H1 (cell line): ENCODE measurements at regions of chr3 and their contacts with region 1.

Region 1: DNA sequence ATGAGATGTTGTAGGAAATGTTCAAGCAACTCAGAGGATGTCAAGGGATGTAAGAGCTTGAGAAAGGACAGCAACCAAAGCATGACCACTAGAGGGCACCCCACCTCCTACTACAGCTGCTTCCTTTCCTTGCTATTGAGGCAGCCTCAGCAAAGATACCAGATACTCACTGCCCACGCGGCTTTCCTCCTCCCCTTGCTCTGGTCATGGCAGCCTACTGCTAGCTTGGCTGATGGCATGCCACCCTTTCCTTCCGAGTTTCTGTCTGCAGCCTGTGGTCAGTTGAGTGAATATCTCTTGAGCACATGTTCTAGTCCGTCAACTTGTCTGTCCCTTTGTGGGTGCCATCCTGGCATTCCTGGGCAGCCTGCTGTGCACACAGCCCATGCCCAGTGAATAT is 4.4 kb upstream of the CXCR6 start:
- DNase-seq: peak; percentile 56 to 86
- H3K4me3 ChIP-seq: no peak overlapping the region
- H3K27ac ChIP-seq: no peak overlapping the region
- H3K4me1 ChIP-seq: peaks cover 0 to 2% (median under 1%) of the 10 kb centered on the region in 4 experiments; a peak in 2 of 7 replicates
- H3K27me3 ChIP-seq: no peaks in the 10 kb centered on the region
- CTCF ChIP-seq: peak; percentile 42 to 98 (median 81)
- EP300 ChIP-seq: no peak
- POLR2A ChIP-seq: no peak
- RAD21 ChIP-seq: peak; percentile 72 to 76

Region 2: DNA sequence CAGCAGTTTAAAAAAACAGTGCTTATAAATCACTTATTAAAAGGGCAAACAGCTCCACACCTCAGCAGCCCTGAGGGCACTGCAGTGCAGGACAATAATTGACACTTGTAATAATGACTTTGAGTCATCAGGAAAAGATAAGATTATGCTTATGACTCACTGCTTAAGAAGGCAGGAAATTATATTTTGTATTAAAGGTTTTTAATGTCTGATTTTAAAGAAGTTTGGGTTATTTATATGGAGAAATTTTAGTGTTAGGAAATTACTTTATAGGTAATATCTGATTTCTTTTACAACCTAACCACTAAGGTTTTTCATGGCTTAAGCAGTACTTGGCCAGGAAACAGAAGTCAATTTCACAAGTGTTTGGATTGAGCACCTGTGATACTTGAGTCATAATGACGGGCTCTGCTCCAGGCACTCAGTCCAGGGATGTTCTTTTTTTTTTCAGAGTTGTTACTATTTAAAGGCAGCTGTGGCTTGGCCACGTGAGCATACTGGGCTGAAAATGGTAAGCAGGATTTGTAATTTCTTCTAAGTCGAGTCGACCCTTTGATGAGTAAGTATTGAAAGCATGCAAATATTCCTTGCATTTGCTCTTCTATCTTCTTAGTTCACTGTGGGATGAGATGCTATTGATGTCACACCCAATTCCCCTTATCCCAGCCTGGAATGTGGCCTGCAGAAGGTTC is 120.9 kb before region 1 on chr3:
- CTCF ChIA-PET with region 1: no interaction called
- POLR2A ChIA-PET with region 1: no interaction called
- DNase-seq: no peak
- H3K4me3 ChIP-seq: no peak overlapping the region
- H3K27ac ChIP-seq: no peak overlapping the region
- H3K4me1 ChIP-seq: no peaks in the 10 kb centered on the region
- H3K27me3 ChIP-seq: no peaks in the 10 kb centered on the region
- CTCF ChIP-seq: no peak
- EP300 ChIP-seq: no peak
- POLR2A ChIP-seq: no peak
- RAD21 ChIP-seq: no peak

Region 3: DNA sequence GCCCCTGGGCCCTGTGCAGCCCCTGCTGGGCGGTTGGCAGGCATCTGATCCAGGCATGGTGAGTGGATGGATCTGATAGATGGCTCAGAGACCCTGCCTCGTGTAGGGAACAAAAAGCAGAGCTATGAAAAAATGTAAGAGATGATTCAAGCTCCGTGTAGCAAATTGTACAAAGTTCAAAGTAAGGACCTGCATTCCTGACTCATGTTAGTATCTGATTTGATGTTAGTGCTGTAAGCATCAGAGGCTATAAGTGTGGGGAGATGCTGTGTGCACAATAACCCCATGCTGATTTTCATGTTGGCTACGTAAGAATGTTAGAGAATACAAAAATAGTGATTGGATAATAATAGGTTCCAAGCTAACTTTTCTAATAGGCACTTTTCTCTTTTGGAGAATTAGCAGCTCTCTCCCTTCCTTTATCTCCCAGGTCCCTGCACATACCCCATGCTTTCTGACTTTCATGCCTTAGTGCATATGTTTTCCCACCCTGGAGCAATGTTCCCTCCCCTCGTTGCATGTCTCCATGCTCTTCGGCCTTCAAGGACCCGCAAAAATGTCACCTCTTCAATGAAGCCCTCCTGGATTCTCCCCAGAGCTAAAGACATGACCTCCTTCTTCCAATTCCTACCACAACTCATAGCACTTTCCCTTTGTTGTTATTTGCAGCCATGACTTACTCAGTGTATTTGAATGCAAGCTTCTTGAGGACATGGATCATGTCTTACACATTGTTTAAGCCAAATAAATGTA is 50.9 kb before region 1 on chr3:
- CTCF ChIA-PET with region 1: no interaction called
- POLR2A ChIA-PET with region 1: no interaction called
- DNase-seq: no peak
- H3K4me3 ChIP-seq: no peak overlapping the region
- H3K27ac ChIP-seq: no peak overlapping the region
- H3K4me1 ChIP-seq: no peaks in the 10 kb centered on the region
- H3K27me3 ChIP-seq: no peaks in the 10 kb centered on the region; a peak in 2 of 7 replicates
- CTCF ChIP-seq: no peak
- EP300 ChIP-seq: no peak
- POLR2A ChIP-seq: no peak
- RAD21 ChIP-seq: no peak

Region 4: GRCh38 chr3:45923755-45924154 is 15.1 kb before region 1 on chr3:
- CTCF ChIA-PET with region 1: interaction called, 35 read pairs
- POLR2A ChIA-PET with region 1: no interaction called
- DNase-seq: no peak
- H3K4me3 ChIP-seq: no peak overlapping the region
- H3K27ac ChIP-seq: no peak overlapping the region
- H3K4me1 ChIP-seq: no peaks in the 10 kb centered on the region
- H3K27me3 ChIP-seq: no peaks in the 10 kb centered on the region
- CTCF ChIP-seq: no peak
- EP300 ChIP-seq: no peak
- POLR2A ChIP-seq: no peak
- RAD21 ChIP-seq: no peak

Region 5: GRCh38 chr3:45950686-45951600 is 12.1 kb after region 1 on chr3:
- CTCF ChIA-PET with region 1: interaction called, 20 read pairs
- POLR2A ChIA-PET with region 1: interaction called, 3 read pairs
- DNase-seq: no peak
- H3K4me3 ChIP-seq: no peak overlapping the region
- H3K27ac ChIP-seq: no peak overlapping the region
- H3K4me1 ChIP-seq: no peaks in the 10 kb centered on the region
- H3K27me3 ChIP-seq: no peaks in the 10 kb centered on the region; a peak in 1 of 7 replicates
- CTCF ChIP-seq: no peak
- EP300 ChIP-seq: no peak
- POLR2A ChIP-seq: no peak
- RAD21 ChIP-seq: no peak

Region 6: GRCh38 chr3:45968706-45969105 is 29.8 kb after region 1 on chr3:
- CTCF ChIA-PET with region 1: interaction called, 51 read pairs
- POLR2A ChIA-PET with region 1: no interaction called
- DNase-seq: no peak
- H3K4me3 ChIP-seq: no peak overlapping the region
- H3K27ac ChIP-seq: no peak overlapping the region
- H3K4me1 ChIP-seq: no peaks in the 10 kb centered on the region
- H3K27me3 ChIP-seq: no peaks in the 10 kb centered on the region
- CTCF ChIP-seq: no peak
- EP300 ChIP-seq: no peak
- POLR2A ChIP-seq: no peak
- RAD21 ChIP-seq: no peak